ENCODE measurements at regions of chr12 and their contacts with region 1.

Region 1: DNA sequence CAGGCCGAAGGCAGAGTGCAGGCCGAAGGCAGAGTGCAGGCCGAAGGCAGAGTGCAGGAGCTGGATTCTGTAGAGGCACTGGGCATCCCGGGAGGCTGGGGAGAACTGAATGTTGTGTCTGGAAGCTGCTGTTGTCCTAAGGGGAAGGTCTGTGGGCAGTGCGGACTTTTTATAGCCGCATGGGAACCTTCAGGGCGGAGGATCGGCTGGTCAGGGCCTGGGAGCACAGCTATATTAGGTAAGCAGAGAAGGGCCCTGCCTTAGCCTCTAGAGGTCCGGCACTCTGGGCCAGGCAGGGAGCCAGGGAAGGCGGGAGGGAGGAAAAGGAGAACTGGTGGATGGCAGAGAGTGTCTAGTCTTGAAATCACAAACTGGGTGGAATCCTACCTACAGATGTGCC is 14.2 kb downstream of the CABP1 start:
- DNase-seq: peak; percentile 85 to 92
- ATAC-seq: peak; percentile 86
- H3K4me3 ChIP-seq: no peak overlapping the region
- H3K27ac ChIP-seq: peak overlapping the region; percentile 40 to 89
- H3K4me1 ChIP-seq: no peaks in the 10 kb centered on the region
- H3K27me3 ChIP-seq: no peaks in the 10 kb centered on the region

Region 2: DNA sequence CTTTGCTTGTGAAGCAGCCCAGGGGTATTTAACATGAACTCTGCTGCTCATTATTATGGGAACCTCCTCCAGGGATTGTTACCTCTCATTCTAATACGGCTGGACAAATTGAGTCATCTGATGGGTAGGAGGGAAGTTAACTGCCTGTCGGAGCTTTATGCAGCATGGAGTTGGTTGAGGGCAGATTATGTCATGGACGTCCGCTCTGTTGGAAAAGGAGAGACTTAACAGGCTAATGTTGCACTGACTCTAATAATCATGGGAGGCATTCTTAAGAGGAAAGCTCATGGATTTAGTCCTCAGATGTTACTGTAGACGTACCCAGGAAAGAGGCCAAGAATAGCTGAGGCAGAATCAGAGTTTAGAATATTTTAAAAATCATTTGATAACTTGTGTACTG is 83.4 kb before region 1 on chr12:
- intact Hi-C with region 1: no loop called
- DNase-seq: no peak
- ATAC-seq: no peak
- H3K4me3 ChIP-seq: no peak overlapping the region
- H3K27ac ChIP-seq: no peak overlapping the region
- H3K4me1 ChIP-seq: no peaks in the 10 kb centered on the region
- H3K27me3 ChIP-seq: no peaks in the 10 kb centered on the region

Region 3: GRCh38 chr12:120686690-120687577 is 32.3 kb after region 1 on chr12 and contains the start of gene MLEC:
- intact Hi-C with region 1: loop called (anchors 2 kb)
- DNase-seq: peak; percentile 99
- ATAC-seq: peak; percentile 97
- H3K4me3 ChIP-seq: peak within 1 kb of the TSS; percentile 79 to 90
- H3K27ac ChIP-seq: peak within 1 kb of the TSS; percentile 18 to 92
- H3K4me1 ChIP-seq: peaks cover 6% of the 10 kb centered on the region in 2 donors
- H3K27me3 ChIP-seq: no peaks in the 10 kb centered on the region
- total RNA-seq, gene MLEC: 67.4 to 92.0 TPM

Measured in aorta (tissue), 5 donors.